Activated CD4-positive, alpha-beta T cell treated with anti-CD3 and anti-CD28 coated beads, Interleukin-2, amount 10 ng/mL, durations not matched to agents 24 days and 14 days (primary cell): ENCODE measurements at regions of chr6 and their contacts with region 1.

Region 1: DNA sequence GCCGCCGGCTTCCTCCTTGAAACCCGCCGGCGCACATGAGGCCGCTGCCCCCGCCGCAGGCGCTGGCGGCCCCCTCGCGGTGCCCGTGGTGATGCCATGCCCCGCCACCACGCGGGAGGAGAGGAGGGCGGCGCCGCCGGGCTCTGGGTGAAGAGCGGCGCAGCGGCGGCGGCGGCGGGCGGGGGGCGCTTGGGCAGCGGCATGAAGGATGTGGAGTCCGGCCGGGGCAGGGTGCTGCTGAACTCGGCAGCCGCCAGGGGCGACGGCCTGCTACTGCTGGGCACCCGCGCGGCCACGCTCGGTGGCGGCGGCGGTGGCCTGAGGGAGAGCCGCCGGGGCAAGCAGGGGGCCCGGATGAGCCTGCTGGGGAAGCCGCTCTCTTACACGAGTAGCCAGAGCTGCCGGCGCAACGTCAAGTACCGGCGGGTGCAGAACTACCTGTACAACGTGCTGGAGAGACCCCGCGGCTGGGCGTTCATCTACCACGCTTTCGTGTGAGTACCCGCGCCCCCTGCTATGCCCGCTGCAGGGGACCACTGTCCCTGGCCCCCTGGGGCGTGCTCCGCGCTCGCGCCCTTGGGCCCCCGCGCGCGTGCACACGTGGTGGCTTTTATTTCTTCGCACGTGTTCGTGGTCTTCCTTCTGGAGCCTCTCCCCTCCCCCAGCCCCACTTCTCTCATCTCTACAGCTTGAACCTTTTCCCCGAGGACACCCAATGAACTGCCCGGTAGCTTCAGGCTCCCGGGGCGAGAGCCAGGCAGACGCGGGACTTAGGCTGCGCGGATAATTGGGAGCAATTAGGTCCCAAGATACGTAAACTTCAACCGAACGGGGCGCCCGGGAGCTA is 453 bp downstream of the KCNQ5 start:
- DNase-seq: peak; percentile 85
- H3K4me3 Mint-ChIP-seq: peak overlapping the region; percentile 98
- H3K27ac Mint-ChIP-seq: peak overlapping the region; percentile 97
- H3K4me1 Mint-ChIP-seq: peaks cover 52% of the 10 kb centered on the region
- H3K27me3 Mint-ChIP-seq: no peaks in the 10 kb centered on the region

Region 2: GRCh38 chr6:72382602-72383529 is 239.5 kb before region 1 on chr6:
- intact Hi-C with region 1: no loop called
- DNase-seq: no peak
- H3K4me3 Mint-ChIP-seq: no peak overlapping the region
- H3K27ac Mint-ChIP-seq: no peak overlapping the region
- H3K4me1 Mint-ChIP-seq: no peaks in the 10 kb centered on the region
- H3K27me3 Mint-ChIP-seq: peaks cover 3% of the 10 kb centered on the region

Region 3: GRCh38 chr6:72649032-72649984 is 27.0 kb after region 1 on chr6:
- intact Hi-C with region 1: loop called (anchors 2 kb)
- DNase-seq: no peak
- H3K4me3 Mint-ChIP-seq: no peak overlapping the region
- H3K27ac Mint-ChIP-seq: peak overlapping the region; percentile 22
- H3K4me1 Mint-ChIP-seq: peaks cover 18% of the 10 kb centered on the region
- H3K27me3 Mint-ChIP-seq: no peaks in the 10 kb centered on the region

Region 4: GRCh38 chr6:72740135-72740534 is 117.8 kb after region 1 on chr6:
- intact Hi-C with region 1: loop called (anchors 5 kb)
- DNase-seq: peak; percentile 59
- H3K4me3 Mint-ChIP-seq: no peak overlapping the region
- H3K27ac Mint-ChIP-seq: peak overlapping the region; percentile 0
- H3K4me1 Mint-ChIP-seq: peaks cover 31% of the 10 kb centered on the region
- H3K27me3 Mint-ChIP-seq: no peaks in the 10 kb centered on the region

Region 5: GRCh38 chr6:73032586-73032985 is 410.3 kb after region 1 on chr6:
- intact Hi-C with region 1: loop called (anchors 5 kb)
- DNase-seq: no peak
- H3K4me3 Mint-ChIP-seq: no peak overlapping the region
- H3K27ac Mint-ChIP-seq: no peak overlapping the region
- H3K4me1 Mint-ChIP-seq: peaks cover 19% of the 10 kb centered on the region
- H3K27me3 Mint-ChIP-seq: no peaks in the 10 kb centered on the region

Region 6: DNA sequence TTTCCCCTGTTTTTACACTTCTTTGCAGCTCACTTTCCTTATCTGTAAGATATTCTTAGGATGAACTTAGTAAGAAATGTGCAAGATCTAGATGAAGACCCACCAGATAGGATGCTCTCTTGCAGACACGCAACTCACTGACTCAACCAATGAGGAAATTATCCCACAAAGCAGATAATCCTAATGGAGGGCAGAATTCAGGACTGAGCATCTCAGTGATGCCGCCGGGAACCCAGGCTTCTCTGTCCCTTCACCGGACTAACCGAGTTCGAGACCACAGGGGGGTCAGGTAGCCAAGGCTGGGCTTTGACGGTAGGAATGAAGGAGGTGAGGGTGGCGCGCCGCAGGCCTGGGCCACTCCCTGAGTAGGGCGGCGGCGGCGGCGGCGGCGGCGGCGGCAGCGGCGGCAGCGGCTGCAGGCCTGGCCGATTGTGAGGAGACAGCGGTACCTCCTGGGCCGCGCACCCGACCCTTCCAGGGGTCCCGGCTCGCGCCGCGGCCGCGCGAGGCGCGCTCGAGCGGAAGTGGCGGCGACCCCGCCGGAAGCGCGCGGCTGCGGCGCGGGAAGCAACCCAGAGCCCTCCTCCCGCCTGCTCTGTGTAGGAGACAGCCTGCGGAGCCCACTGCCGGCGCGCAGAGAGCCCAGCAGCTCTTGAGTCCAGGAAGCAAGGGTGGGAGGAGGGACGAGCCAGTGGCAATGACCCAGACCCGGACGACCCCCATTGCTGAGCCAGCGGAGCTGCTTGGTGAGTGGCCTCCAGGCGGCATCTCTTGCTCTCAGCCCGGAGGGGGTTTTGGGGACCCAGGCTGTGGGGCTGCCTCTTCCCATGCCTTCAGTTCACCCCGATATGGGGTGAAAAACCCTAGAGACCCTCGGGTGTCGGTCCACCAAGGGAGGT is 640.6 kb after region 1 on chr6 and contains the start of gene KHDC1:
- intact Hi-C with region 1: loop called (anchors 2 kb)
- DNase-seq: peak; percentile 89
- H3K4me3 Mint-ChIP-seq: peak within 1 kb of the TSS; percentile 86
- H3K27ac Mint-ChIP-seq: peak within 1 kb of the TSS; percentile 83
- H3K4me1 Mint-ChIP-seq: peaks cover 29% of the 10 kb centered on the region
- H3K27me3 Mint-ChIP-seq: no peaks in the 10 kb centered on the region
- total RNA-seq, gene KHDC1: 5.1 and 5.2 TPM in 2 replicates

Region 7: GRCh38 chr6:73461537-73462350 is 839.4 kb after region 1 on chr6 and contains the start of gene MTO1:
- intact Hi-C with region 1: loop called (anchors 5 kb)
- DNase-seq: peak; percentile 93
- H3K4me3 Mint-ChIP-seq: peak within 1 kb of the TSS; percentile 94
- H3K27ac Mint-ChIP-seq: peak within 1 kb of the TSS; percentile 98
- H3K4me1 Mint-ChIP-seq: peaks cover 45% of the 10 kb centered on the region
- H3K27me3 Mint-ChIP-seq: no peaks in the 10 kb centered on the region
- total RNA-seq, gene MTO1: 35.5 and 35.7 TPM in 2 replicates